Body of pancreas (tissue), 4 donors: ENCODE measurements at regions of chr17 and their contacts with region 1.

Region 1: GRCh38 chr17:10844621-10845387 is 6.9 kb upstream of the PIRT start:
- DNase-seq: peak; percentile 70 to 84 (median 72)
- ATAC-seq: peak; percentile 90
- H3K4me3 ChIP-seq: peak overlapping the region in 1 of 2 donors; percentile 31
- H3K27ac ChIP-seq: peak overlapping the region in 1 of 4 donors; percentile 8
- H3K4me1 ChIP-seq: peaks cover 6% of the 10 kb centered on the region
- H3K27me3 ChIP-seq: no peaks in the 10 kb centered on the region
- CTCF ChIP-seq: peak; percentile 91 to 98 (median 96)
- POLR2A ChIP-seq: no peak

Region 2: DNA sequence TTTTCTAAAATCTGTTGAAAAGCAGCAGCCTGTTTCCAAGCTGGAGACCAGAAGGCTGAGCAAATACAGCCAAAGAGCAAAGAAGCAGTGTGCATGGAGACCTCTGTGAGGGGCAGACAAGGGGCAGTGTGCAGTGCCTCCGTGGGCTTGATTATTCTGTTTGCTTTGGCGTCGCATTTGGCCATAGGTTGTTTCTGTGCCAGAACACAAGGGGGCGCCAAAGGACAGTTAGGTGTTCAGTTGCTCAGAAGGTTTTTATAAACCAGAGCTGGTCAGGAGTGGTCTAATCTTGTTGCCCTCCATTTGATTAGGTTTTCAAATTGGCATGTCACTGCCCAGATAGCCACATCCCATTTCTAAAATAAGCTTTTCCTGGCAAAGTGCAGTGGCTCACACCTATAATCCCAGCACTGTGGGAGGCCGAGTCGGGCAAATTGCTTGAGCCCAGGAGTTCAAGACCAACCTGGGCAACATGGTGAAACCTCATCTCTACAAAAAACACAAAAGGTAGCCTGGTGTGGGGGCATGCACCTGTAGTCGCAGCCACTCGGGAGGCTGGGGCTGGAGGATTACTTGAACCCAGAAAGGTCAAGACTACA is 198.3 kb before region 1 on chr17:
- intact Hi-C with region 1: loop called (anchors 5 kb)
- DNase-seq: peak; percentile 70 to 80 (median 74)
- ATAC-seq: peak; percentile 48
- H3K4me3 ChIP-seq: no peak overlapping the region
- H3K27ac ChIP-seq: no peak overlapping the region
- H3K4me1 ChIP-seq: peaks cover 3% of the 10 kb centered on the region
- H3K27me3 ChIP-seq: no peaks in the 10 kb centered on the region
- CTCF ChIP-seq: peak; percentile 76 to 82 (median 77)
- POLR2A ChIP-seq: no peak

Region 3: DNA sequence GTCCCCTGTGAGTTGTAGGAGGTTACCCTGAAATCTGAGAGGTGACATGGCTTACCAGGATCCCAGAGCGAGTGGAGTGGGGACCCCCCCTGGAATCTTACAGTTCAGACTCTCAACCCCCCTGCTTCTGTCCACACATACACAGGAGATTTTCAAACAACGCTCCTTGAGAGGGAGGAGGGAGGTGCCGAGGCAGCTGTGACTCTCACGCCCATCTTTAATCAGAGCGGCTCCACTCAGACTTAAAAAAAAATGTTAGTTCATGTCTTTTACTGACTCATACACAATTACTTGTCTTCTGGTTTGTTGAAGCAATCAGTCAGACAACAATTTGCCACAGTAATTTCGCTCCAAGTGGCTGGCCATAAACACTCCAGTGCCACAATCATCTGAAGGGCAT is 99.6 kb before region 1 on chr17:
- intact Hi-C with region 1: loop called (anchors 5 kb)
- DNase-seq: no peak
- ATAC-seq: no peak
- H3K4me3 ChIP-seq: no peak overlapping the region
- H3K27ac ChIP-seq: no peak overlapping the region
- H3K4me1 ChIP-seq: peaks cover 9% of the 10 kb centered on the region
- H3K27me3 ChIP-seq: no peaks in the 10 kb centered on the region
- CTCF ChIP-seq: no peak
- POLR2A ChIP-seq: no peak

Region 4: DNA sequence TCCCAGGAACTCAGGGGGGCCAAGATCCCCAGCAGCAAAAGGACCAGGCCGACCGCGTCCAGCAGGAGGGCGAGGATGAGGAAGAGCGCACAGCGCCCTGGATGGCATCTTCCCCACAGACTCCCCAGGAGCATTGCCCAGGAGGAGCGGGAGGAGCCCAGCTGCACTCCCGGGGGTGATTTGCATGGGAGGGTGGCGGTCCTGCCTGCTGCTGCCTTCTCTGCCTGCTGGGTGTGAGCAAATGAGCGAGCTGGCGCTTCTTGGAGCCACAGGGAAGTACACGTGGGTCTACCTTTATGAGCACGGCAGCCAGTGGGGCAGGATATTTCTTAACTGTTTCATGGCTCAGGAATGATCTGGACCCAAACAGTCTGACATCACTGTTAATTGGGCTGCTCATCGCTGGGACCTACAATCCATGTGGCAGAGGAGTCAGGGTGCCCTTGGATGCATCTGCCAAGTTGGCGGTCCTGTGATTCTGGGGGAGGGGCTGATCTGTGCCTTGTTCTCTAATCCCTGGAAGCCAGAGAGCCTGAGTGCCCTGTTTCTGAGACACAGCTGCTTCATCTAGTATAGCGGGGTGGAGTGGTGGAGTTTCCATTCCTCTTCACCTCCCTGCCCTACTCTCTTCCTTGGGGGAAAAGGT is 40.9 kb before region 1 on chr17 and contains the start of gene TMEM238L:
- intact Hi-C with region 1: loop called (anchors 5 kb)
- DNase-seq: no peak
- ATAC-seq: no peak
- H3K4me3 ChIP-seq: no peak within 1 kb of the TSS
- H3K27ac ChIP-seq: no peak within 1 kb of the TSS
- H3K4me1 ChIP-seq: peaks cover 18% of the 10 kb centered on the region
- H3K27me3 ChIP-seq: no peaks in the 10 kb centered on the region
- CTCF ChIP-seq: no peak
- POLR2A ChIP-seq: no peak
- total RNA-seq, gene TMEM238L: not detected